ENCODE measurements at regions of chr14 and their contacts with region 1.

Region 1: DNA sequence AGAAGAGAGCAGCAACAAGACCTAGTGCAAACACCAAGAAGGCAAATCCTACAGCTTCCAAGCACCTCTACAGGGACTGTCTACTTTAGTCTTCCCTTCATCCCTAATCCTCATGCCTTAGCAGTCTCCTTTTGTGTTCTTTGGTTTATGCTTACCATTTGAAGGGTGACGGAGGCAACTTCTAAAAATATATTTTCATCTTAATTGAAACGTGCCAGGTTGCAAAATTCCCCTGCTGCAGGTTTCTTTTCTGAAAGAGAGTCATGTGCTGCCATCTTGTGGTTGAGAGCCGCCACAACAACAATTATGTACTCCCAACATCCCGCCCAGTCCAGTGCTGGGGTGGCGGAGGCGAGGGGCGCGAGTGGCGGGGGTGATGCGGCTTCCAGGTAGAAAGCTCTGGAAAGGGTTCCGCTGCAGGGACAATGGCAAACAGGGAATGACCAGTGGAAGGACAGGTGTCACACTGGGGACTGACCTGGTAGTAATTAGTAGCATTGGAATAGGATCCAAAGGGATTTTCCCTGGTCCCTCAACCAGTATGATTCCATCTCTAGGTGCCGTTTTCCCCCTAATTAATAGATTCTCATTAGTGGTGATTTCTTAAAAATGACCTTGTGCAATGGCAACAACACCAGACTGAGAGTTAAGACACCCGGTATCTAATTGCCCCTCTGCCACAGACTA is 80.3 kb upstream of the GNG2 start:
- DNase-seq: peak in 9 of 10 donors; percentile 50 to 89 (median 75)
- H3K4me3 ChIP-seq: peak overlapping the region in 21 of 59 donors; percentile 3 to 45 (median 16)
- H3K27ac ChIP-seq: no peak overlapping the region
- H3K27me3 ChIP-seq: no peaks in the 10 kb centered on the region
- CTCF ChIP-seq: peak; percentile 77 to 97 (median 88)

Region 2: DNA sequence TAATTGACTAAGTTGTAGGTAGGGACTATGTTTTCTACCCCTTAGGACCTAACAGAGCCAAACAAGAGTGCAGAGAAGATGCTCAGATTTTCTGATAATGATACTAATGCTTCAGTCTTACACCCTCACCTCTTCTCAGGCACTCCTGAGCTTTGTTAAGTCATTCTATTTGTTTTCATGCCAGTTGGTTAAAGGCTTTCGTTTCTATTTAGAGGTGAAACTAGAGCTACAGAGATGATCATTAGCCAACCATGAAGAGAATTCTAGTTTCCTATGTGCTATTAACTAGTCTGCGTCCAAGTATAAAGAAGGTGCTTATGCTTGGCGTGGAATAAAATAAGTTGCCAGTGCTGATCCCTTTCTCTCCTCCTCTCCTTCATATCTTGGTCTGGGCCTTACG is 801.3 kb before region 1 on chr14:
- intact Hi-C with region 1: loop called in 1 of 2 experiments (anchors 10 kb)
- DNase-seq: no peak
- H3K4me3 ChIP-seq: no peak overlapping the region
- H3K27ac ChIP-seq: peak overlapping the region in 3 of 59 donors; percentile 6 to 41 (median 18)
- H3K27me3 ChIP-seq: no peaks in the 10 kb centered on the region
- CTCF ChIP-seq: no peak

Region 3: GRCh38 chr14:51283402-51284085 is 496.6 kb before region 1 on chr14:
- intact Hi-C with region 1: loop called (anchors 2 to 5 kb)
- DNase-seq: no peak
- H3K4me3 ChIP-seq: no peak overlapping the region
- H3K27ac ChIP-seq: no peak overlapping the region
- H3K27me3 ChIP-seq: no peaks in the 10 kb centered on the region
- CTCF ChIP-seq: peak; percentile 66 to 96 (median 85)

Region 4: GRCh38 chr14:51369814-51370213 is 410.3 kb before region 1 on chr14:
- intact Hi-C with region 1: loop called in 1 of 2 experiments (anchors 10 kb)
- DNase-seq: no peak
- H3K4me3 ChIP-seq: no peak overlapping the region
- H3K27ac ChIP-seq: no peak overlapping the region
- H3K27me3 ChIP-seq: no peaks in the 10 kb centered on the region
- CTCF ChIP-seq: peak in 30 of 56 donors; percentile 7 to 49 (median 28)

Region 5: GRCh38 chr14:51651388-51652167 is 128.6 kb before region 1 on chr14 and contains the start of gene FRMD6:
- intact Hi-C with region 1: loop called (anchors 10 kb)
- DNase-seq: peak; percentile 57 to 84 (median 70)
- H3K4me3 ChIP-seq: peak within 1 kb of the TSS; percentile 70 to 98 (median 90)
- H3K27ac ChIP-seq: peak within 1 kb of the TSS; percentile 75 to 99 (median 96)
- H3K27me3 ChIP-seq: no peaks in the 10 kb centered on the region
- CTCF ChIP-seq: peak in 54 of 56 donors; percentile 24 to 75 (median 57)
- total RNA-seq, gene FRMD6: 9.1 to 40.7 (median 19.1) TPM

Region 6: GRCh38 chr14:51726166-51726899 is 53.8 kb before region 1 on chr14:
- intact Hi-C with region 1: no loop called
- DNase-seq: no peak
- H3K4me3 ChIP-seq: no peak overlapping the region
- H3K27ac ChIP-seq: peak overlapping the region in 2 of 59 donors; percentile 5 to 12
- H3K27me3 ChIP-seq: no peaks in the 10 kb centered on the region
- CTCF ChIP-seq: no peak

Region 7: DNA sequence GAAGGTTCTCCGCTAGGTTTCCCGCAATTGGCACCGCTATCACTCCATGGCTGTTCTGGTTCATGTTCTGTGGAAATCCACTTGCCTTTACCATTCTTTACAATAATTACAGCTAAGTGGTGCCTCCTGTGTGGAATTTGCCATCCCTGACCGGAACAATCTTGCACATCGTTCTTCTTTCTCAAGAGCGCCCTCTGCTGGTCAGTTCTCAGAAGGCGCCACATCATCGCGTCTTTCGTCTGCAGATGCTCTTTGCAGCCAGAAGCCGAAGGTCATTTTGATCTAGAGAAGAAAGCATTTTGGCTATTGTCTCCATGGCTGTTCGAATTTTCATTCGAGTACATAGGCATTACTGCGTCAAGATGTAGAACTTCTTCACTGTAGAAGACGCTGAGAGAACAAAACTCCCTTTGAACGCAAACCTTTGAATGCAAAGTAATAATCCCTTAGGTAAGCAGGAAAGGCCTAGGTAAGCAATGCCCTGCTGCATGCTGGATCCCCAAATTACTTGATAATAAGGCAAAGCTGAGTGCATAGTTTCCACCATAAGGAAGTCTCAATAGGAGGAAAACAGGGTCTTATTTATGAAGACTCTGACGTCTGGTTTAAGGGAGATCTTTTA is 199.1 kb after region 1 on chr14:
- intact Hi-C with region 1: loop called (anchors 5 to 10 kb)
- DNase-seq: peak; percentile 77 to 90 (median 84)
- H3K4me3 ChIP-seq: peak overlapping the region in 14 of 59 donors; percentile 3 to 43 (median 20)
- H3K27ac ChIP-seq: no peak overlapping the region
- H3K27me3 ChIP-seq: no peaks in the 10 kb centered on the region
- CTCF ChIP-seq: peak; percentile 79 to 98 (median 95)

Region 8: DNA sequence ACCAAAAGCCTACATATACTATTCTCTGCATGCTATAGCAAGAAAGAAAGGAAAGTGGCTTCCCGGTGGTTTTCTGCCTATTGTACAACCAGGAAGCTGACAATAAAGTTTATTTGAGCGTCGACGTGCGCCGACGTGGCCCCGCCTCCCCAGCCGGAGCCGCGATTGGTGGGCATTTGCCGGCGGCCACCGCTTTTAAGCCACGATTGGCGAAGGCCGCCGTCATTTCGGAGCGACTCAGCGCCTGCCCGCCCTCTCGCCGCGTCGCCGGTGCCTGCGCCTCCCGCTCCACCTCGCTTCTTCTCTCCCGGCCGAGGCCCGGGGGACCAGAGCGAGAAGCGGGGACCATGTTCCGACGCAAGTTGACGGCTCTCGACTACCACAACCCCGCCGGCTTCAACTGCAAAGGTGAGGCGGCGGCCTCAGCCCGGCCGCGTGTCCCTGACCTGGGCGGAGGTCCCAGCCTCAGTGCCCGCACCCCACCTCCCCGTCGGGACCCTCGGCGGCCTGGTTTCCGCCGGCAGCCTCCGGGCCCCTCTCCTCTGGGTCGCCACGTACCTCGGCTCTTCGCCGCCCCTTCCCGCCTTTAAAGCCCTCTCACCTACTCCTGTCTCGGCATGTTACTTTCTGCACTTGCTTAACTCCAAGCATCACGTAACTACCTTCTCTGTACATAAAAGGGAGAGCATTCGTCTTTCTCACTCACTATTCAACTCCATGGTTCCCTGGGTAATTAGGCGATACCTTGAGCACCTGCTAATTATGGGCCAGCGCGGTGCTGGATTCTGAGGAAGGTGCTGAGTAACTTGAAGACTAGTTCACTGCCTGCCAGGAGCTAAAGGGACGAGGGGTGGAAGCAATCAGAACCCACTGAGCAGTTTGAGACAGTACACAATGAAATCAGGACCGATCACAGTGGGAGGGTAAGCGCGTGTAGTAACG is 209.4 kb after region 1 on chr14 and contains the start of gene RTRAF:
- intact Hi-C with region 1: loop called in 1 of 2 experiments (anchors 10 kb)
- DNase-seq: peak; percentile 88 to 98 (median 95)
- H3K4me3 ChIP-seq: peak within 1 kb of the TSS; percentile 68 to 100 (median 95)
- H3K27ac ChIP-seq: peak within 1 kb of the TSS; percentile 44 to 93 (median 81)
- H3K27me3 ChIP-seq: no peaks in the 10 kb centered on the region
- CTCF ChIP-seq: peak in 42 of 56 donors; percentile 8 to 64 (median 38)
- total RNA-seq, gene RTRAF: 37.8 to 99.0 (median 69.0) TPM